ENCODE measurements at regions of chr5 and their contacts with region 1.

Region 1: GRCh38 chr5:65102828-65103711 is 334.3 kb downstream of the CWC27 start:
- DNase-seq: peak in 1 of 2 donors; percentile 15
- ATAC-seq: peak; percentile 48 to 57
- H3K4me3 ChIP-seq: peak overlapping the region; percentile 62 to 70 (median 65)
- H3K27ac ChIP-seq: peak overlapping the region; percentile 61 to 76 (median 68)
- H3K4me1 ChIP-seq: no peaks in the 10 kb centered on the region
- H3K27me3 ChIP-seq: no peaks in the 10 kb centered on the region
- CTCF ChIP-seq: peak in 4 of 5 experiments; percentile 11 to 50 (median 32)
- POLR2A ChIP-seq: no peak

Region 2: DNA sequence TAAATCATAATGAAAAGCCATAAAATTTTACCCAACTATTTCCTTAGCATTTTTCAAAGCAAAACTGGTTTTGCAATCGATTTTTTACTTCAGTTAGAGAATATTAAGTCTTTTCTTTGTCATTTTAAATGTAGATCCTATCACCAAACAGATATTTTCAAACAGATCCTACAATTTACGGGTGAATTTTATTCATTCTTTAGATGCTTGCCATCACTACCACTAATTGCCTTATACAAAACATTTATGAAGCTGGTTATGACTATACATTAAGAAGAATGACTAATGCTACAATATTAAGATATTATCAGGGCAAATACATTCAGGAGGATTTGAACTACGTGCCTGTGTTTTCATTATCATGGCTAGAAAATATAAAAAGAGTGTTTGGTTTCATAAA is 137.5 kb before region 1 on chr5:
- in situ Hi-C with region 1: no loop called
- intact Hi-C with region 1: loop called (anchors 10 kb)
- DNase-seq: no peak
- ATAC-seq: no peak
- H3K4me3 ChIP-seq: no peak overlapping the region
- H3K27ac ChIP-seq: no peak overlapping the region
- H3K4me1 ChIP-seq: no peaks in the 10 kb centered on the region
- H3K27me3 ChIP-seq: no peaks in the 10 kb centered on the region
- CTCF ChIP-seq: no peak
- POLR2A ChIP-seq: no peak